Activated T-helper 1 cell treated with anti-CD3 and anti-CD28 coated beads, Interleukin-12 subunit alpha, Interleukin-12 subunit beta, Interleukin-2, Interleukin-4 antibody, amounts not matched to agents 30 ng/mL and 10 ng/mL and 1 ng/mL, durations not matched to agents 14 hours and 24 hours and 36 hours (primary cell): ENCODE measurements at regions of chrX and their contacts with region 1.

Region 1: DNA sequence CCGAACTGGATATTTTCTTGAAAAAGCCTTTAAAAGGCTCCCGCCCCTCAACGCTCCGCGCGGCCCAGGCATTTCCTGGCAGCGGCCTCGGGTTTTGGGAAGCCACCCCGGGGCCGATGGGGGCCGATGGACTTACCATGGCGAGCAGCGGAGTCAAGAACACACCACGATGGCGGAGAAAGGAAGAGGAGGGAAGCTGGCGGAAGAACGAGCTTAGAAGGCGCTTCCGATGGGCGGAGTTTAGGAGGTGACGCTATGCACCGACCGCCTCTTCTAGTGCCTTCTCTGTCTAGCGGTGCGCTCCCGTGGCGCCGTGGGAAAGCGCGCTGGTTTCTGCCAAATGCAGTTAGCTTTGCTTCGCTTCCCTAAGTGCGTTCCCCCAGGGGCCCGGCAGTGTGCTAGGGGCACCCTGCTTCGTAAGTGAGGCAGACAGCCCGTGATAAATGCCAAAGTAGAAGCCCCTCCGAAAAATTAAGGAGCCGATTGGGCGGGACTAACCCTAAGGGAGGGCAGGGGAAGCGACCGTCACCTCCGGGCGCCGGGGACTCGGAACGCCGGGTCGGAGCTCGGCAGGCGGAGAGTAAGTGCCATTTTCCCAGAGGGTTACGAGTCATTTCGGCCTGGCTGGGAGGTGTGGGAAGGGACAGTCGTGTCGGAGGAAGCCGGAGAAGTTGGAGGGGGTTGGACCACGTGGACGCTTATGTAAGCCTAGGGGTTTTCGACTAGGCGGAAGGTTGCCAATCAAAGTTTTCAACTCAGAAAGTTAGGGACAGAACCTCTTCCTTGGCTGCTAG is at the start of gene RPL39:
- DNase-seq: peak; percentile 75
- H3K4me3 Mint-ChIP-seq: peak within 1 kb of the TSS; percentile 96
- H3K27ac Mint-ChIP-seq: peak within 1 kb of the TSS; percentile 95
- H3K4me1 Mint-ChIP-seq: peaks cover 10% of the 10 kb centered on the region
- H3K27me3 Mint-ChIP-seq: no peaks in the 10 kb centered on the region
- total RNA-seq, gene RPL39: 1,853 and 1,912 TPM in 2 replicates

Region 2: GRCh38 chrX:119826399-119826959 is 34.8 kb after region 1 on chrX:
- intact Hi-C with region 1: loop called (anchors 1 kb)
- DNase-seq: peak; percentile 0
- H3K4me3 Mint-ChIP-seq: no peak overlapping the region
- H3K27ac Mint-ChIP-seq: no peak overlapping the region
- H3K4me1 Mint-ChIP-seq: peaks cover 10% of the 10 kb centered on the region
- H3K27me3 Mint-ChIP-seq: no peaks in the 10 kb centered on the region

Region 3: GRCh38 chrX:119852382-119853353 is 61.0 kb after region 1 on chrX and contains the start of gene UPF3B:
- intact Hi-C with region 1: loop called (anchors 1 kb)
- DNase-seq: peak; percentile 90
- H3K4me3 Mint-ChIP-seq: peak within 1 kb of the TSS; percentile 94
- H3K27ac Mint-ChIP-seq: peak within 1 kb of the TSS; percentile 97
- H3K4me1 Mint-ChIP-seq: peaks cover 8% of the 10 kb centered on the region
- H3K27me3 Mint-ChIP-seq: no peaks in the 10 kb centered on the region
- total RNA-seq, gene UPF3B: 11.0 and 13.0 TPM in 2 replicates

Region 4: GRCh38 chrX:119880552-119881437 is 89.2 kb after region 1 on chrX:
- intact Hi-C with region 1: loop called (anchors 2 kb)
- DNase-seq: no peak
- H3K4me3 Mint-ChIP-seq: no peak overlapping the region
- H3K27ac Mint-ChIP-seq: peak overlapping the region; percentile 79
- H3K4me1 Mint-ChIP-seq: peaks cover 12% of the 10 kb centered on the region
- H3K27me3 Mint-ChIP-seq: no peaks in the 10 kb centered on the region

Region 5: DNA sequence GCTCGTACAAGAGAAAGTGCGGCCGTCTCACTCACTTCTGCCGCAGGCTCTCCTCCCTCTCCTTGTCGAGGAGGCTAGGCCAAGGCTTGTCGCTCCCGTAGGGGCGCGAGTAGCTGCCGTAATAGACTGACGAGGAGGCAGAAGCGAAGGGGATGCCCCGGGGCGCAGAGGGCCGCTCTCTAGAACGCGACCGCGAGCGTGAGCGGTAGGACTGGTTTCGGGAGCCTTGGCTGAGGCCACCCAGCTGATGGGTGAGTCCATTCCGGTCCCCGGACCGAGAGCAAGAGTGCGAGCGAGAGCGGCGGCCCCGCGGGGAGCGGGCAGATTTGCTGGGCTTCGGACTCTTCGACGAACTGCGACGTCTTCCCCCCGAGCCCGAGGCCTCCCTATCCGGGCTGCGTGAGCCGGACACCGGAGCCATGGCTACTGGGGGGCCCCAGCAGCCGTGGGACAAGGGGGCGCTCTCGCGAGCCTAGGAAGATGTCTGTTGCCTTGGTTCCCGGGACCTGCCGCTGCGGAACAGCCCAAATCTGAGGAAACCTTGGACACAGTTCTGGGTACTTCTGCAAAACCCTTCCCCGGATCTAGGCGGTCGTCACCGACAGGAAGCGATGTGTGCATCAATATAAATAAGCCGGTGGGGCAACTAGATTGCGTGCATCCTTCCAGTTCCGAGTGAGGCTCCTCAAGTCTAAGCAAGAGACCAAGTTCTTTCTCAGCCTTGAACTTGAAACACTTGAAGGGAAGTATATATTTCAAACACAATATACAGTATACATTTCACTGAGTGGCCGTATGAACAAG is 151.8 kb after region 1 on chrX and contains the start of gene NKAP:
- intact Hi-C with region 1: loop called (anchors 1 kb)
- DNase-seq: peak; percentile 78
- H3K4me3 Mint-ChIP-seq: peak within 1 kb of the TSS; percentile 93
- H3K27ac Mint-ChIP-seq: peak within 1 kb of the TSS; percentile 97
- H3K4me1 Mint-ChIP-seq: peaks cover 16% of the 10 kb centered on the region
- H3K27me3 Mint-ChIP-seq: peaks cover 2% of the 10 kb centered on the region
- total RNA-seq, gene NKAP: 9.4 and 10.1 TPM in 2 replicates